Tibial artery (tissue), 4 donors: ENCODE measurements at regions of chr2 and their contacts with region 1.

Region 1: GRCh38 chr2:170088776-170089175 is 89.2 kb upstream of the MYO3B start:
- DNase-seq: no peak
- H3K4me3 ChIP-seq: no peak overlapping the region
- H3K27ac ChIP-seq: no peak overlapping the region
- H3K4me1 ChIP-seq: peaks cover 0 to 6% (median 0%) of the 10 kb centered on the region in 4 donors
- H3K27me3 ChIP-seq: no peaks in the 10 kb centered on the region
- CTCF ChIP-seq: no peak

Region 2: GRCh38 chr2:169933124-169933711 is 155.6 kb before region 1 on chr2:
- intact Hi-C with region 1: loop called (anchors 10 kb)
- DNase-seq: no peak
- H3K4me3 ChIP-seq: no peak overlapping the region
- H3K27ac ChIP-seq: no peak overlapping the region
- H3K4me1 ChIP-seq: no peaks in the 10 kb centered on the region
- H3K27me3 ChIP-seq: no peaks in the 10 kb centered on the region
- CTCF ChIP-seq: peak; percentile 67 to 73